ENCODE measurements at regions of chr2 and their contacts with region 1.

Region 1: GRCh38 chr2:61426267-61426897 is 44.5 kb downstream of the USP34 start:
- DNase-seq: peak; percentile 87
- ATAC-seq: peak; percentile 86
- H3K4me3 ChIP-seq: no peak overlapping the region
- H3K4me3 Mint-ChIP-seq: peak overlapping the region; percentile 60
- H3K27ac ChIP-seq: peak overlapping the region; percentile 83 to 90
- H3K27ac Mint-ChIP-seq: peak overlapping the region; percentile 91
- H3K4me1 ChIP-seq: peaks cover 45 to 50% of the 10 kb centered on the region in 2 donors
- H3K4me1 Mint-ChIP-seq: peaks cover 73% of the 10 kb centered on the region
- H3K27me3 ChIP-seq: no peaks in the 10 kb centered on the region
- H3K27me3 Mint-ChIP-seq: no peaks in the 10 kb centered on the region
- CTCF ChIP-seq: peak; percentile 89

Region 2: GRCh38 chr2:61262699-61263098 is 163.7 kb before region 1 on chr2:
- CTCF ChIA-PET with region 1: no interaction called
- POLR2A ChIA-PET with region 1: no interaction called
- intact Hi-C with region 1: no loop called
- DNase-seq: no peak
- ATAC-seq: no peak
- H3K4me3 ChIP-seq: no peak overlapping the region
- H3K4me3 Mint-ChIP-seq: no peak overlapping the region
- H3K27ac ChIP-seq: no peak overlapping the region
- H3K27ac Mint-ChIP-seq: no peak overlapping the region
- H3K4me1 ChIP-seq: no peaks in the 10 kb centered on the region
- H3K4me1 Mint-ChIP-seq: no peaks in the 10 kb centered on the region
- H3K27me3 ChIP-seq: no peaks in the 10 kb centered on the region
- H3K27me3 Mint-ChIP-seq: no peaks in the 10 kb centered on the region
- CTCF ChIP-seq: no peak

Region 3: GRCh38 chr2:61443342-61444041 is 17.1 kb after region 1 on chr2:
- CTCF ChIA-PET with region 1: interaction called, 29 read pairs
- POLR2A ChIA-PET with region 1: interaction called, 7 read pairs
- intact Hi-C with region 1: loop called (anchors 1 kb)
- DNase-seq: peak; percentile 74
- ATAC-seq: peak; percentile 82
- H3K4me3 ChIP-seq: no peak overlapping the region
- H3K4me3 Mint-ChIP-seq: peak overlapping the region; percentile 72
- H3K27ac ChIP-seq: peak overlapping the region; percentile 15 to 28
- H3K27ac Mint-ChIP-seq: peak overlapping the region; percentile 66
- H3K4me1 ChIP-seq: peaks cover 50 to 57% of the 10 kb centered on the region in 2 donors
- H3K4me1 Mint-ChIP-seq: peaks cover 75% of the 10 kb centered on the region
- H3K27me3 ChIP-seq: no peaks in the 10 kb centered on the region
- H3K27me3 Mint-ChIP-seq: no peaks in the 10 kb centered on the region
- CTCF ChIP-seq: no peak

Region 4: GRCh38 chr2:61470965-61471904 is 44.9 kb after region 1 on chr2 and contains the start of gene USP34:
- CTCF ChIA-PET with region 1: interaction called, 30 read pairs
- POLR2A ChIA-PET with region 1: interaction called, 5 read pairs
- intact Hi-C with region 1: loop called (anchors 1 kb)
- DNase-seq: peak; percentile 96
- ATAC-seq: peak; percentile 79
- H3K4me3 ChIP-seq: peak within 1 kb of the TSS; percentile 69 to 95 (median 85)
- H3K4me3 Mint-ChIP-seq: peak within 1 kb of the TSS; percentile 93
- H3K27ac ChIP-seq: peak within 1 kb of the TSS; percentile 96 to 99
- H3K27ac Mint-ChIP-seq: peak within 1 kb of the TSS; percentile 96
- H3K4me1 ChIP-seq: peaks cover 24% of the 10 kb centered on the region in 2 donors
- H3K4me1 Mint-ChIP-seq: peaks cover 29% of the 10 kb centered on the region
- H3K27me3 ChIP-seq: no peaks in the 10 kb centered on the region
- H3K27me3 Mint-ChIP-seq: no peaks in the 10 kb centered on the region
- CTCF ChIP-seq: no peak
- total RNA-seq, gene USP34: 311 and 320 TPM in 2 replicates

Region 5: DNA sequence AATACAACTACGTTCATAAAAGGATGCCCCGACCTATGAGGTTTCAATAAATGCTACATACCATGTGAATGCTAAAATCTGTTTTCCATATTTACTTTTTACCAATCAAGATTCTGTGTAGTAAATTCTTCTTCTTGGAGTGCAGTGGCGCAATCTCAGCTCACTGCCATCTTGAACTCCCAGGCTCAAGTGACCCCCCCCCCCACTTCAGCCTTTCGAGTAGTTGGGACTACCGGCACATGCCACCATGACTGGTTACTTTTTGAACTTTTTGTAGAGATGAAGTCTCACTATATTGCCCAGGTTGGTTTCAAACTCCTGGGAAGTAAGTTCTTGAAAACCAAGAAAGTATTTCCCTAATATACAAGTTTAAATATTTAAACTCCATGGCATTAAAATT is 58.9 kb after region 1 on chr2:
- CTCF ChIA-PET with region 1: interaction called, 39 read pairs
- POLR2A ChIA-PET with region 1: no interaction called
- intact Hi-C with region 1: no loop called
- DNase-seq: no peak
- ATAC-seq: no peak
- H3K4me3 ChIP-seq: no peak overlapping the region
- H3K4me3 Mint-ChIP-seq: no peak overlapping the region
- H3K27ac ChIP-seq: no peak overlapping the region
- H3K27ac Mint-ChIP-seq: no peak overlapping the region
- H3K4me1 ChIP-seq: no peaks in the 10 kb centered on the region
- H3K4me1 Mint-ChIP-seq: no peaks in the 10 kb centered on the region
- H3K27me3 ChIP-seq: no peaks in the 10 kb centered on the region
- H3K27me3 Mint-ChIP-seq: no peaks in the 10 kb centered on the region
- CTCF ChIP-seq: no peak

Region 6: GRCh38 chr2:61658841-61659780 is 232.7 kb after region 1 on chr2:
- CTCF ChIA-PET with region 1: interaction called, 8 read pairs
- POLR2A ChIA-PET with region 1: no interaction called
- intact Hi-C with region 1: loop called (anchors 2 kb)
- DNase-seq: peak; percentile 41
- ATAC-seq: no peak
- H3K4me3 ChIP-seq: no peak overlapping the region
- H3K4me3 Mint-ChIP-seq: no peak overlapping the region
- H3K27ac ChIP-seq: no peak overlapping the region
- H3K27ac Mint-ChIP-seq: no peak overlapping the region
- H3K4me1 ChIP-seq: no peaks in the 10 kb centered on the region
- H3K4me1 Mint-ChIP-seq: no peaks in the 10 kb centered on the region
- H3K27me3 ChIP-seq: no peaks in the 10 kb centered on the region
- H3K27me3 Mint-ChIP-seq: no peaks in the 10 kb centered on the region
- CTCF ChIP-seq: peak; percentile 67

Region 7: GRCh38 chr2:61905372-61906185 is 479.2 kb after region 1 on chr2 and contains the start of gene COMMD1:
- CTCF ChIA-PET with region 1: no interaction called
- POLR2A ChIA-PET with region 1: no interaction called
- intact Hi-C with region 1: no loop called
- DNase-seq: peak; percentile 87
- ATAC-seq: peak; percentile 99
- H3K4me3 ChIP-seq: peak within 1 kb of the TSS; percentile 61 to 97 (median 87)
- H3K4me3 Mint-ChIP-seq: peak within 1 kb of the TSS; percentile 91
- H3K27ac ChIP-seq: peak within 1 kb of the TSS; percentile 57 to 86
- H3K27ac Mint-ChIP-seq: peak within 1 kb of the TSS; percentile 90
- H3K4me1 ChIP-seq: peaks cover 7 to 8% of the 10 kb centered on the region in 2 donors
- H3K4me1 Mint-ChIP-seq: peaks cover 11% of the 10 kb centered on the region
- H3K27me3 ChIP-seq: no peaks in the 10 kb centered on the region
- H3K27me3 Mint-ChIP-seq: no peaks in the 10 kb centered on the region
- CTCF ChIP-seq: no peak
- total RNA-seq, gene COMMD1: 25.1 and 26.7 TPM in 2 replicates

Measured in B cell (primary cell).